ENCODE measurements at regions of chr18 and their contacts with region 1.

Region 1: GRCh38 chr18:46155641-46156051 is 51.5 kb downstream of the HAUS1 start:
- DNase-seq: peak; percentile 60
- ATAC-seq: peak; percentile 83
- H3K4me3 Mint-ChIP-seq: no peak overlapping the region
- H3K27ac Mint-ChIP-seq: peak overlapping the region; percentile 85
- H3K4me1 Mint-ChIP-seq: peaks cover 49% of the 10 kb centered on the region
- H3K27me3 Mint-ChIP-seq: no peaks in the 10 kb centered on the region

Region 2: GRCh38 chr18:45755934-45756333 is 399.7 kb before region 1 on chr18:
- CTCF ChIA-PET with region 1: no interaction called
- POLR2A ChIA-PET with region 1: no interaction called
- intact Hi-C with region 1: no loop called
- DNase-seq: no peak
- ATAC-seq: no peak
- H3K4me3 Mint-ChIP-seq: no peak overlapping the region
- H3K27ac Mint-ChIP-seq: no peak overlapping the region
- H3K4me1 Mint-ChIP-seq: no peaks in the 10 kb centered on the region
- H3K27me3 Mint-ChIP-seq: peaks cover 25% of the 10 kb centered on the region

Region 3: DNA sequence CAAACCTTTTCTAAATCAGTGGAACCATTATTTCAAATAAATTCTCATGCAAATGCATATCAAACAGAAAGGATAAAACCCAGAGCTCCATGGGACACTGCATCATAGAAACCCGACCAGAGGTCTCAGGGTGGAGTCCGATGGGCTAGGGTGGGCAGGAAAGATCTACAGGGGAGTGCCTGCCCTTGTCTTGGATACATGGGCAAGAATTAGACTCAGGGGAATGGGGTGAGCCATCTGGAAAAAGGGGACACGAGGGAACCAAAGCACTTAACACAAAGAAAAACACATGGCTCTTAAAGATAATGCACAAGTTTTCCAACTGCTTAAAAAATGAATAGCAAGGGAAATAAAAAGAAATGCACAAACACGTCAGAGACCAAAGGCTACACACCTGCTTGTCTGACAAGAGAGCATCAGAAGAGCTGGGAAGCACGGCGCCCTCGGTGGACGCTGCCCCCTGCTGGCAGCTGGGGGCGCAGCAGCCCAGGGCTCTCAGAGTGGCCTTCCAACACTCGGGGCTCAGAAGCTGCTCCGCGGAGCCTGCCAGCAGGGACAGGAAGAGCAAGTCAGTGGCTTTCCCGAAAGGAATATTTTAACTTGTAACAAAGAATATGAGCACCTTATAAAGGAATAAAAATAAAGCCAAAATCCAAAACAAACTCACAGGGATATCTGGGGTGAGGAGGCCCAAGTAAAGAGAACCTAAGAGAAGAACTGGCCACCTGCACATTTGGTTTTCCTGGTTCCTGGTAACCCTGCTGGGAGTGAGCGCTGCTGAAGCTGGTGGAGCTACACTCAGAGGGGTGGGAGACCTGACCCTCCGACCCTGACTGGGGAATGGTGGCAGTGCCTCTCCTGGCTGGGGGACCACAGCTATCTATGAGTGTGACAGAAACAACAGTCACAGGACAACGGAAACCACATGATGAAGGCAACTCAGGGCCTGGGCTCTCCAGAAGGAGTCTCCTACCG is 275.7 kb before region 1 on chr18:
- CTCF ChIA-PET with region 1: no interaction called
- POLR2A ChIA-PET with region 1: no interaction called
- intact Hi-C with region 1: no loop called
- DNase-seq: peak; percentile 85
- ATAC-seq: peak; percentile 87
- H3K4me3 Mint-ChIP-seq: no peak overlapping the region
- H3K27ac Mint-ChIP-seq: no peak overlapping the region
- H3K4me1 Mint-ChIP-seq: peaks cover 10% of the 10 kb centered on the region
- H3K27me3 Mint-ChIP-seq: no peaks in the 10 kb centered on the region

Region 4: DNA sequence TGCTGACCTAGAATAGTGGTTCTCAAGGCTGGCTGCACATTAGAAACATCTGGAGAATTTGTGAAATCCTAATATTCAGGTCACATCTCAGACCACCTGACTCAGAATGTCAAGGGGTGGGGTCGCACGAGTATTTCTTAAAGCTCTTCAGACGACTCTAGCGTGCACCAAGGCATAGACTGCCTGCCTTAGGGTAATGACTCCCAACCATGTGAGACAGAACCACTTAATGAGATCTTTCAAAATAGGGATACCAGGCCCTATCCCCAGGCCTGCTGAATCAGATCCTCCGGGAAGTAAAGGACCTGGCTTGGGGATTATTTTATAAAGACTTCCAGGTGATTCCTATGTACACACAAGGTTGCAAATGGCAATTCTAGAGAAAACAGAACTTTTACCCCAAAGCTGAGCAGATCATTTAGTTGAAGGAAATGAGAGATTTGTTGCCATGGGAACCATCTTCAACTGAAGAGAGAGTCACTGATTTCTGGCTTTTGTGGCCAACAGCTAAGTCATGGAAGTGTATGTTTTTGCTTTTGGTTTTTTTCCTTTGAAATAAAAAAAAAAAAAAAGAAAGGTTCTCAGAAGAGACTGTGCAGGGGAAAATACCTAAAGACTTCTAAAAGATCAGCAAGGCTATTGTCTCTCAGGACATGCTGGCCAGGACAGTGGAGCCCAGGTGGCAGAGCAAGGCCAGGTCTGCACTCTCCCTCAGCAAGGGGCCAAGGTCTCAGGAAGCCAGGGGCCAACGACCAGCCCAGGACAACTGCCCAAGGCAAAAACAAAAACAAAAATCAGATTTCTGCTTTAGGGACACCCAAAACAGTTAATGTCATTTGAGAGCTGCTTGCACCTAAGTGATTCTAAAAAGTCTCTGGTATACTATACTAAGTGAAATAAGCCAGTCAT is 516.7 kb after region 1 on chr18:
- CTCF ChIA-PET with region 1: no interaction called
- POLR2A ChIA-PET with region 1: no interaction called
- intact Hi-C with region 1: loop called in 1 of 2 experiments (anchors 5 kb)
- DNase-seq: no peak
- ATAC-seq: peak; percentile 79
- H3K4me3 Mint-ChIP-seq: no peak overlapping the region
- H3K27ac Mint-ChIP-seq: peak overlapping the region; percentile 42
- H3K4me1 Mint-ChIP-seq: peaks cover 16% of the 10 kb centered on the region
- H3K27me3 Mint-ChIP-seq: peaks cover 2% of the 10 kb centered on the region

Measured in activated CD4-positive, alpha-beta T cell treated with anti-CD3 and anti-CD28 coated beads for 36 hours (primary cell).